ENCODE measurements at regions of chr4 and their contacts with region 1.

Region 1: GRCh38 chr4:70183168-70183939 is 12.2 kb upstream of the ODAM start:
- DNase-seq: peak; percentile 10
- H3K4me3 ChIP-seq: no peak overlapping the region
- H3K27ac ChIP-seq: no peak overlapping the region
- H3K4me1 ChIP-seq: no peaks in the 10 kb centered on the region
- H3K27me3 ChIP-seq: peaks cover 4% of the 10 kb centered on the region
- CTCF ChIP-seq: peak; percentile 83 to 84

Region 2: DNA sequence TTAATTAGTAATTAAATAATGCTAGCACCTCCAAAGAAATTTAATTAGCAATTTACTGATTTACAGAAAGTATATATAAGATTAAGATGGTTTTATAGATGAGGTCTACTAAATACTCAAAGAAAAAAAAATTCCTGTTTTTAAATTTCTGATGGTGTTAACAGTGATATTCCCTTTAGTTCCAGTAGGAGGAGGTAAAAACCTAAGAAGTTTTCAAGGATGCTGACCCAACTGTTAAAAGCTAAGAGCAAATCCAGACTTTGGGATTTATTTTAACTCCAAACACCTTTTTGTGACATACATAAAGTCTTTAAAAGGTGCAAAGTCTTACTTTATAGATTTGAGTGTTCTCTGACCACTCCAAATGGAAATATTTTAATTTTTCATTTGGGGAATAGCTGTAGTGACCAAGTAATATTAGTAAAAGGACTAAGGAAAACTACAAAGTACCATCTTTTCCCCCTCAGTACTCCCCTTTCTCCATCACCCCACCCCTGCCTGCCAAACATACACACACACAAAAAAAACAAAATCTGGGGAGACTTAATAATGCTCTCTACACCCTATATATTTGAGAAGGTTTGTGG is 286.7 kb before region 1 on chr4:
- CTCF ChIA-PET with region 1: no interaction called
- dilution Hi-C with region 1: no loop called
- in situ Hi-C with region 1: loop called (anchors 10 to 25 kb)
- intact Hi-C with region 1: loop called (anchors 2 kb)
- DNase-seq: no peak
- H3K4me3 ChIP-seq: no peak overlapping the region
- H3K27ac ChIP-seq: no peak overlapping the region
- H3K4me1 ChIP-seq: no peaks in the 10 kb centered on the region
- H3K27me3 ChIP-seq: peaks cover 2% of the 10 kb centered on the region
- CTCF ChIP-seq: peak; percentile 44 to 60

Region 3: DNA sequence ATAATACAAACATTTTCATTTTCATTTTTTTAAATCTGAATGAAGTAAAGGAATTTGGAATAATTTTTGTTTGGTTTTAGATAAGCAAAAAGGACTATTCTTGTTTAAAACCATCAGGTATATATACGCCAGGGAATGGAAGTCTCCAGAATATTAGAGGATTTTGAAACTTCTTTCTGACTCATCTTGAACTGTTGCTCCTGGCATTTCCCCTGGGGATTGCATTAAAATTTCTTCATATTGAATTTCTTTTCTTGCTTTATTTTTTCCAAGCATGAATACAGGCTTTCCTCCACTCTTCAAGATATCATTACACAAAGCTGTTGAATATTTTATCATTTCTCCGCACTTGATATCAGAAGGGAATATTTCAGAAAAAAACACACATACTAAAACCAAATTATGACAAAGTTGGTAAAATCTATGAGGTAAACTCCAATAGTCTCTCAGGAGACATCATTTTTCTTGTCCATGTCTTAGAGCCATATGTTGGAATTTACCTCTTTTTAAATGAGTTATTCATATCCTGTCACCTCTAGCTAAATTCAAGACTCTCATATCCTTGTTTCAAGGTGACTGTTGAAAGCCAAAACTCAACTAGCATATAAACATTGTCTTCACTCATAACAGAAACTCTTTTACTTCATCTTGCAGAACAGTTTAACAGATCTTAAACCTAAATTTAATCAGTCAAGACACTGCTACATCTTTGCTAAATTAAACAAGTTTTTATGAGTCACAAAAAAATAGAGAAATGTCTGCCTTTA is 273.2 kb before region 1 on chr4:
- CTCF ChIA-PET with region 1: no interaction called
- dilution Hi-C with region 1: no loop called
- in situ Hi-C with region 1: loop called in 1 of 2 experiments (anchors 25 kb)
- intact Hi-C with region 1: no loop called
- DNase-seq: no peak
- H3K4me3 ChIP-seq: no peak overlapping the region
- H3K27ac ChIP-seq: no peak overlapping the region
- H3K4me1 ChIP-seq: no peaks in the 10 kb centered on the region
- H3K27me3 ChIP-seq: peaks cover 2% of the 10 kb centered on the region
- CTCF ChIP-seq: no peak

Region 4: DNA sequence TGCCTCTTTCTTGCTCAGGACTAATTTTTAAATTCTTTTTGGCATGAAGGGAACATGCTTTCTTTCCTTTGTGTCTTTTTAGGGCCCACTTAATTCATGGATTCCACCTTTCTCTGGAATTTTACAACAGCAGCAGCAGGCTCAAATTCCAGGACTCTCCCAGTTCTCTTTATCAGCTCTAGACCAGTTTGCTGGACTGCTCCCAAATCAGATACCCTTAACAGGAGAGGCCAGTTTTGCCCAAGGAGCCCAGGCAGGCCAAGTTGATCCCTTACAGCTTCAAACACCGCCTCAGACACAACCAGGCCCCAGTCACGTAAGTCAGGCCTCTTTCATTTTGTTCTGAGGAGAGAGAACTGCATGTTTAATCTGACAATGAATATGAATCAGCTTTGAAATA is 14.5 kb after region 1 on chr4:
- CTCF ChIA-PET with region 1: no interaction called
- dilution Hi-C with region 1: no loop called
- in situ Hi-C with region 1: no loop called
- intact Hi-C with region 1: no loop called
- DNase-seq: no peak
- H3K4me3 ChIP-seq: no peak overlapping the region
- H3K27ac ChIP-seq: no peak overlapping the region
- H3K4me1 ChIP-seq: no peaks in the 10 kb centered on the region
- H3K27me3 ChIP-seq: peaks cover 4% of the 10 kb centered on the region
- CTCF ChIP-seq: no peak

Region 5: GRCh38 chr4:70269674-70270073 is 86.3 kb after region 1 on chr4:
- CTCF ChIA-PET with region 1: no interaction called
- dilution Hi-C with region 1: no loop called
- in situ Hi-C with region 1: no loop called
- intact Hi-C with region 1: no loop called
- DNase-seq: peak; percentile 0
- H3K4me3 ChIP-seq: no peak overlapping the region
- H3K27ac ChIP-seq: no peak overlapping the region
- H3K4me1 ChIP-seq: no peaks in the 10 kb centered on the region
- H3K27me3 ChIP-seq: no peaks in the 10 kb centered on the region
- CTCF ChIP-seq: peak in 1 of 2 donors; percentile 26

Measured in mammary epithelial cell (primary cell).